ENCODE measurements at regions of chr1 and their contacts with region 1.

Region 1: GRCh38 chr1:154183045-154183915 is 8.6 kb downstream of the TPM3 start:
- DNase-seq: peak; percentile 96
- ATAC-seq: peak; percentile 97

Region 2: DNA sequence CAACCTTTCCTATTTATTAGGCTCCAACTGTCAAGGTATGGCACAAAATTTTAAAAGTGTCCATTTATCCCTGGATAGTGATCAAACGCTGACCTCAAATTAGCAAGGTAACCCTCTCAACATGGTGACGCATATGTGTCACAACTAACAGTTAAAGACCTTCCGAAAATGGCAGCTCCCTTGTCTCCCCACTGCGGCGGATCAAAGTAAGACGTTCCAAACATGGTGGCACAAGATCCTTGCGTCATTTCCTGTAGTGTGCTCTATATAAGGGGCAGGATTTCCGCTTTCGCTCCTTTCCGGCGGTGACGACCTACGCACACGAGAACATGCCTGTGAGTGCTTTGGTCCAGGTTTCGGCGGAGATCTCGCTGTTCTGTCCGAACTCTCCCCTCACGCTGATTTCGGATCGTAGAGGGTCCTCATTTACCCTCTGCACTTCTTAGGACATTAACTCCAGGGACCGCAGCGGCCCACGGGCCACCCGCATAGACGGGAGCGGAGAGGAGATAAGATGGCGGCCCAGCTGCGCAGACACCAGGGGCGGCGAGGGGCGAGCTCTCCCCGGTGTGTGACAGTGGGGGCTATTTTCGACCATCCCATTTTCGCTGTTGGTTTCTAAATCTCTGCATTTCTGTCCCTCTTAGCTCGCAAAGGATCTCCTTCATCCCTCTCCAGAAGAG is 192.7 kb before region 1 on chr1 and contains the start of gene RPS27:
- intact Hi-C with region 1: loop called (anchors 10 kb)
- DNase-seq: peak; percentile 84
- ATAC-seq: peak; percentile 79
- total RNA-seq, gene RPS27: 917 TPM